ENCODE measurements at regions of chr6 and their contacts with region 1.

Region 1: DNA sequence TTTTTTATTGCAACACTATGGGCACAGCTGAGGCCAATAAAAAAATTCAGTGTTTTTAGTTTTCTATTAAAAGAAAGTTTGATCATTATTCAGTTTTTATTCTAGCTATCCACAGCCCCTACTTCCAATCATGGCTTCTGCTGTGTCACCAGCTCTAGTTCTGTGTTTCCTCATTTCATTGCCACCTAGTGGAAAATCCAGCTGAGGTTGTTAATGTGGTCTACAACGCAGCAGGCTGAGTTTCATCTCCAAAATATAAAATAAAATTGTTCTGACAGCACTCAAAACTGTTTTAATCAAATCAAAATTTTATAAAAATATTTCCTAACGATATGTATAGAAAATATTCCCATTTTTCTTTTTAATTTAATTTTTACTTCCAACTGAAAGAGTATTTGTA is 13.6 kb downstream of the COL9A1 start:
- DNase-seq: no peak

Region 2: DNA sequence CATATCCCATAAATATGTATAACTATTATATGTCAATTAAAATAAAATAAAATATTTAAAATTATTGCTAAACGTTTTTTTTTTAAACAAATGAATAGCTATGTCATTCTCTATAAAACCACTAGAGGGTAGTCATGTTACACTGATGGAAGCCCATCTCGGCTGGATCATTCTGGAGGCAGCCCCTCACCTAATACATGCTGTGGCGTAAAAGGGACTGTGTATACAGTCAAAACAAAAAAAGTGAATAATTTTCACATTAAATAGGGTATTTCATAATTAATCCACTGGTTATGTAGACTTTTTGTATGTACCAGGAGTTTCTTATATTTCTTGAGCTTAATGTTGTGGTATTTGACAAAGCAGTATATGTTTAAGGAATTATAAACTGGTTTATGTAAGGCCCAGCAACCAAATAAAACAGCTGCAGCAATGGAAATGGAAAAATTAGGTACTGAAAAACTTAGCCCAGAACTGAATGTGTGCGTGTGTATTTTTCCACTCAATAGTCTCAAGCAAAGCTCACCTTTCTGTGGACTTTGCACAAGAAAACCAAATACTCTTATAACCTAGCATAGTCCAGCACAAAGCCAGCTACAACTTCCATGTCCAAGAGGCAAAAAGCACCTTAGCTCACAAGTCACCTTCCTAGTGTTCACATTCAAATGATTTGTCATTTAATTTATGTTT is 68.1 kb before region 1 on chr6:
- intact Hi-C with region 1: loop called (anchors 10 kb)
- DNase-seq: no peak